ENCODE measurements at regions of chr18 and their contacts with region 1.

Region 1: DNA sequence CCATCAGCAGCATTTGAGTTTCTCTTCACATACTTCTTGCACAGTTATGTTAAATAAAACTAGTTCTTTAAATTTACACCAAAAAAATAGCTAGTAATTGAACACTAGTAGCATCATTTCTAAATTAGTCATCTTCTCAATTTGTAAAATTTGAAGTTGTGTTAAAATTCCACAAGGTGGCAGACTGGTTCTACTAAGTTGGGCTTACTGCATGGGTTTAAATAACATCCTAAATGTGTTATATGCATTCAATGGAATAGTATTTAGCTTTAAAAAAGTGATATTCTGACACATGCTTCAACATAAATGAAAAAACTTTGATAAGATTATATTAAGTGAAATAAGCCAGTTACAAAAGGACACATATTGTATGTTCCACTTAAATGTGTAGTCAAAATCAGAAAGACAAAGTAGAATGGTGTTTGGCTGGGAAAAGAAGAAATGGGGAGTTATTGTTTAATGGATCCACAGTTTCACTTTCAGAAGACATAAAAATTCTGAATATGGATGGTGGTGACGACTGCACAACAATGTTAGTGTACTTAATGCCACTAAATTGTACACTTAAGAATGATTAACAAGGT is 28.7 kb upstream of the RPRD1A start:
- DNase-seq: no peak
- ATAC-seq: peak in 1 of 4 donors; percentile 42
- H3K4me3 ChIP-seq: no peak overlapping the region
- H3K27ac ChIP-seq: no peak overlapping the region
- H3K4me1 ChIP-seq: no peaks in the 10 kb centered on the region
- H3K27me3 ChIP-seq: peaks cover 0 to 5% (median 0%) of the 10 kb centered on the region in 9 donors
- CTCF ChIP-seq: peak; percentile 34 to 77 (median 54)
- POLR2A ChIP-seq: no peak

Region 2: GRCh38 chr18:35616664-35617423 is 479.2 kb before region 1 on chr18:
- intact Hi-C with region 1: no loop called
- DNase-seq: peak in 3 of 5 donors; percentile 16 to 39 (median 25)
- ATAC-seq: peak in 3 of 4 donors; percentile 49 to 66 (median 63)
- H3K4me3 ChIP-seq: no peak overlapping the region
- H3K27ac ChIP-seq: peak overlapping the region in 3 of 12 donors; percentile 14 to 44 (median 20)
- H3K4me1 ChIP-seq: peaks cover 4 to 62% (median 39%) of the 10 kb centered on the region in 12 donors
- H3K27me3 ChIP-seq: no peaks in the 10 kb centered on the region
- CTCF ChIP-seq: no peak
- POLR2A ChIP-seq: no peak

Region 3: DNA sequence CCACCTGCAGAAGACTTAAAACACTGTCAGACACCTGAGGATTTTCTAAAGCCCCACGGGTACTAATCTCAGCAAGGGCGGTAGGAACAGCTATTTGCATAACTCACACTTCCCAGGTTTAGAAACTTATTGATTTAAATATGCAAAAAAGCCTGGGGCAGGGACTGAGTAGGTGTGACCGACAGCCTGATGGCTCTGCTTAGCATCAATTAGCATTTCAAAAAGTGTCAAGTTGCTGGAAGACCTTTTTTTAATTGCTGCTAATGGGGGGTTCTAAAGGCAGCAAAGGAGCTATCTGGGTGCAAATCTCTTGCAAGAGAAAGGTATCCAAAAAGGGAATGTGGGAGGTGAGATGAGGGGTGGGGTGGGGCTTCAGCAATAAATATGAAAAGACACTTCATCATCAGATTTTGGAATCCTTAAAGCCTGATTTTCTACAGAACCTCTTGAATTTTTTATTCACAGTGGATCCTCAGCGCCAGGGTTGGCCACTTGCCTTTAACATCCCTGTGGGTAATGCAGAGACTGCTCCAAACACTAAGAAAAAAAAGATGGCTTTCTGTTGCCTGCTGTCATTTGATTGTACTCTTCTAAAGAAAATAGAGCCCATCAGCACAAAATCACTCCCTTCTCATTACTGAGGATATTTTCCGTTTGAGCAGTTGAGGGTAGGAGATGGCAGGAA is 244.6 kb before region 1 on chr18:
- intact Hi-C with region 1: no loop called
- DNase-seq: no peak
- ATAC-seq: no peak
- H3K4me3 ChIP-seq: no peak overlapping the region
- H3K27ac ChIP-seq: no peak overlapping the region
- H3K4me1 ChIP-seq: peaks cover 0 to 11% (median 0%) of the 10 kb centered on the region in 12 donors
- H3K27me3 ChIP-seq: no peaks in the 10 kb centered on the region
- CTCF ChIP-seq: no peak
- POLR2A ChIP-seq: no peak

Region 4: GRCh38 chr18:36015629-36016028 is 80.4 kb before region 1 on chr18:
- intact Hi-C with region 1: loop called in 2 of 10 experiments (anchors 10 kb)
- DNase-seq: no peak
- ATAC-seq: no peak
- H3K4me3 ChIP-seq: no peak overlapping the region
- H3K27ac ChIP-seq: no peak overlapping the region
- H3K4me1 ChIP-seq: peaks cover 0 to 8% (median 0%) of the 10 kb centered on the region in 12 donors
- H3K27me3 ChIP-seq: no peaks in the 10 kb centered on the region
- CTCF ChIP-seq: no peak
- POLR2A ChIP-seq: no peak